Transverse colon (tissue), 4 donors: ENCODE measurements at regions of chr18 and their contacts with region 1.

Region 1: GRCh38 chr18:61322265-61322873 is 10.9 kb upstream of the CDH20 start:
- DNase-seq: peak; percentile 64
- H3K4me3 ChIP-seq: no peak overlapping the region
- H3K27ac ChIP-seq: no peak overlapping the region
- H3K4me1 ChIP-seq: no peaks in the 10 kb centered on the region
- H3K27me3 ChIP-seq: no peaks in the 10 kb centered on the region
- CTCF ChIP-seq: peak; percentile 49 to 82 (median 67)
- EP300 ChIP-seq: no peak
- POLR2A ChIP-seq: no peak

Region 2: GRCh38 chr18:61295153-61295552 is 27.2 kb before region 1 on chr18:
- in situ Hi-C with region 1: no loop called
- intact Hi-C with region 1: no loop called
- DNase-seq: no peak
- H3K4me3 ChIP-seq: no peak overlapping the region
- H3K27ac ChIP-seq: no peak overlapping the region
- H3K4me1 ChIP-seq: peaks cover 0 to 4% (median 0%) of the 10 kb centered on the region in 4 donors
- H3K27me3 ChIP-seq: no peaks in the 10 kb centered on the region
- CTCF ChIP-seq: no peak
- EP300 ChIP-seq: no peak
- POLR2A ChIP-seq: no peak

Region 3: GRCh38 chr18:61496374-61496773 is 174.0 kb after region 1 on chr18:
- in situ Hi-C with region 1: loop called in 3 of 4 experiments (anchors 10 to 25 kb)
- intact Hi-C with region 1: no loop called
- DNase-seq: no peak
- H3K4me3 ChIP-seq: no peak overlapping the region
- H3K27ac ChIP-seq: no peak overlapping the region
- H3K4me1 ChIP-seq: no peaks in the 10 kb centered on the region
- H3K27me3 ChIP-seq: peaks cover 3% of the 10 kb centered on the region
- CTCF ChIP-seq: no peak
- EP300 ChIP-seq: no peak
- POLR2A ChIP-seq: no peak